ENCODE measurements at regions of chr14 and their contacts with region 1.

Region 1: DNA sequence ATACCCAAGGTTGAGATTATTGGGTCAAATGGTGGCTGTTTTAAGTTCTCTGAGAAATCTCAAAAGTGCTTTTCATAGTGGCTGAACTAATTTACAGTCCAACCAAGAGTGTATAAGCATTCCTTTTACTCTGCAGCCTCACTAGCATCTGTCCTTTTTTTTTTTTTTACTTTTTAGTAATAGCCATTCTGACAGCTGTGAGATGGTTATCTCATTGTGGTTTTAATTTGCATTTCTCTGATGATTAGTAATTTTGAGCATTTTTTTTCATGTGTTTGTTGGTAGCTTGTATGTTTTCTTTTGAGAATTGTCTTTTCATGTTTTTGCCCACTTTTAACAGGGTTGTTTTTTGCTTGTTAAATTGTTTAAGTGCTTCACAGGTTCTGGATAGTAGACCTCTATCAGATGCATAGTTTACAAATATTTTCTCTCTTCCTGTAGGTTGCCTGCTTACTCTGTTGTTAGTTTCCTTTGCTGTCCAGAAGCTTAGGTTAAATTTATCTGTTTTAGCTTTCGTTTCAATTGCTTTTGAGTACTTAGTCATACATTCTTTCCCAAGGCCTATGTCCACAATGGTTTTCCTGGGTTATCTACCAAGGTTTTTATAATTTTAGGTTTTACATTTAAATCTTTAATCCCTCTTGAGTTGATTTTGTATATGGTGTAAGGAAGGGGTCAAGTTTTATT is 881.3 kb upstream of the SEL1L start:
- DNase-seq: no peak
- H3K4me3 ChIP-seq: no peak overlapping the region
- H3K27ac ChIP-seq: no peak overlapping the region
- H3K4me1 ChIP-seq: no peaks in the 10 kb centered on the region
- H3K27me3 ChIP-seq: no peaks in the 10 kb centered on the region
- CTCF ChIP-seq: no peak
- EP300 ChIP-seq: no peak
- POLR2A ChIP-seq: no peak

Region 2: DNA sequence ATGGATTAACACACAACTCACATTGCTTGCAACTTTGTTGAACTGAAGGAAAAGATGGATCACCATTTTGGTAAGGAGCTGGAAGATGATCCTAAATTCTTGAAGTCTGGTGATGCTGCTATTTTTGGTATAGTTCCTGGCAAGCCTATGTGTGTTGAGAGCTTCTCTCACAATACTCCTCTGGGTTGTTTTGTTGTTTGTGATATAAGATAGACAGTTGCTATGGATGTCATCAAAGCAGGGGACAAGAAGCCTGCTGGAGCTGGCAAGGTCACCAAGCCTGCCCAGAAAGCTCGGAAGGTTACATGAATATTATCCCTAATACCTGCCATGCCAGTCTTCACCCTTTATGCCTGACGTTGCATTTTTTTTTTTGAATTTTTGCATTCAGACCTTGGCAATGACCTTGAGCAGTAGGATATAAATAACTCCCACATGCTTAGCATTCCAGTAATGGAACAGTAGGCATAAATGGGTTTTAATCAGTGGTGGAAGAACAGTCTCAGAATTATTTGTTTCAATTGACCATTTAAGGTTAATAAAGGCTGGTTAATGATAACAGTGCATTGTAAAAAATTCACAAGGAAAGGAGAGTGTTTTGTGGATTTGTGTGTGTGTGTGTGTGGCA is 752.3 kb before region 1 on chr14:
- in situ Hi-C with region 1: no loop called
- intact Hi-C with region 1: no loop called
- DNase-seq: no peak
- H3K4me3 ChIP-seq: no peak overlapping the region
- H3K27ac ChIP-seq: no peak overlapping the region
- H3K4me1 ChIP-seq: no peaks in the 10 kb centered on the region
- H3K27me3 ChIP-seq: no peaks in the 10 kb centered on the region
- CTCF ChIP-seq: no peak
- EP300 ChIP-seq: no peak
- POLR2A ChIP-seq: no peak

Region 3: GRCh38 chr14:82366803-82367202 is 48.2 kb before region 1 on chr14:
- in situ Hi-C with region 1: no loop called
- intact Hi-C with region 1: loop called (anchors 1 kb)
- DNase-seq: no peak
- H3K4me3 ChIP-seq: no peak overlapping the region
- H3K27ac ChIP-seq: no peak overlapping the region
- H3K4me1 ChIP-seq: no peaks in the 10 kb centered on the region
- H3K27me3 ChIP-seq: no peaks in the 10 kb centered on the region
- CTCF ChIP-seq: no peak
- EP300 ChIP-seq: no peak
- POLR2A ChIP-seq: no peak